ENCODE measurements at regions of chr13 and their contacts with region 1.

Region 1: GRCh38 chr13:50911937-50912795 is 2.6 kb downstream of the RNASEH2B start:
- DNase-seq: peak; percentile 88
- ATAC-seq: peak; percentile 63
- H3K4me3 ChIP-seq: peak overlapping the region; percentile 95
- H3K27ac ChIP-seq: peak overlapping the region; percentile 99
- H3K4me1 ChIP-seq: peaks cover 25% of the 10 kb centered on the region
- H3K27me3 ChIP-seq: no peaks in the 10 kb centered on the region
- CTCF ChIP-seq: peak; percentile 89 to 98 (median 91); a peak in 5 of 6 replicates
- EP300 ChIP-seq: peak; percentile 38 to 94; a peak in 3 of 4 replicates
- POLR2A ChIP-seq: peak; percentile 37; the same call in 1 of the 2 replicates
- RAD21 ChIP-seq: peak; percentile 98

Region 2: GRCh38 chr13:49976314-49977258 is 935.6 kb before region 1 on chr13:
- CTCF ChIA-PET with region 1: interaction called, 56 read pairs
- POLR2A ChIA-PET with region 1: interaction called, 4 read pairs
- RAD21 ChIA-PET with region 1: interaction called, 56 read pairs
- SMC1A ChIA-PET with region 1: interaction called, 33 read pairs
- in situ Hi-C with region 1: loop called (anchors 5 kb)
- intact Hi-C with region 1: loop called (anchors 1 kb)
- DNase-seq: peak; percentile 55
- ATAC-seq: peak; percentile 95
- H3K4me3 ChIP-seq: no peak overlapping the region
- H3K27ac ChIP-seq: no peak overlapping the region
- H3K4me1 ChIP-seq: no peaks in the 10 kb centered on the region
- H3K27me3 ChIP-seq: no peaks in the 10 kb centered on the region
- CTCF ChIP-seq: peak; percentile 86 to 95 (median 88)
- EP300 ChIP-seq: no peak
- POLR2A ChIP-seq: no peak
- RAD21 ChIP-seq: peak; percentile 99

Region 3: DNA sequence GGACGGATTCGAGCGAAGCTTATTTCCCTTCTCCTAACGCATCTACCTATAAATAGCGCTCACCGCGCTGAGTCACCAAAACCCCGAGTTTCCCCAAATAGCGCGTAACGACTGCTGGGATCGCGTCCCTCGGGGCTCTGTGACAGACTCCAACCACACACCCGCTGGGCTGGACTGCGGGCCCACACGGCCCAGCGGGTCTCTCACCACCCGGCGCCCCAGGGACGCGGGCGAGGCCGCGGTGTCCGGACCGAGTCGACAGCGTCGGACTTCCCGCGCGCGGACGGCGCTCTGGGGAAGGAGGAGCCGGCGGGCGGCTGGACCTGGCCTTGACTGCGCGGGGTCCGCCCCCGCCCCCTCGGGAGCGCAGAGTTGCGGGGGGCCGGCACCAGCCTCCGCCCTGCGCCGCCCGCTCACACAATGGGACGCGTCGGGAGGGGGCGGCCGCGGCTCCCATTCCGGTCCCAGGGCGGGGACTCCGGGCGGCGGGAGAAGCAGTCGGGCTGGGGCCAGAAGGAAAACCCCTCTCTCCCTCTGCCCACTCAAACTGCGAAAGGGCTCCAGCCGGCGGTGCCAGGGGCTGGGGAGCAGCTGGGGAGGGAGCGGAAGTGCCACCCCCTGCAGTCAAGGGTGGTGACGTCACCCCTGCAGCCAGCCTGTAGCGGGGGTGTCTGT is 788.2 kb before region 1 on chr13:
- CTCF ChIA-PET with region 1: no interaction called
- POLR2A ChIA-PET with region 1: no interaction called
- RAD21 ChIA-PET with region 1: interaction called, 4 read pairs
- SMC1A ChIA-PET with region 1: no interaction called
- in situ Hi-C with region 1: no loop called
- intact Hi-C with region 1: loop called (anchors 5 kb)
- DNase-seq: no peak
- ATAC-seq: peak; percentile 80
- H3K4me3 ChIP-seq: peak overlapping the region; percentile 62
- H3K27ac ChIP-seq: no peak overlapping the region
- H3K4me1 ChIP-seq: peaks cover 30% of the 10 kb centered on the region
- H3K27me3 ChIP-seq: peaks cover 5 to 7% of the 10 kb centered on the region in 2 experiments; a peak in 3 of 4 replicates
- CTCF ChIP-seq: peak in 1 of 3 experiments; percentile 10; a peak in 1 of 6 replicates
- EP300 ChIP-seq: no peak
- POLR2A ChIP-seq: peak; percentile 65
- RAD21 ChIP-seq: no peak

Region 4: DNA sequence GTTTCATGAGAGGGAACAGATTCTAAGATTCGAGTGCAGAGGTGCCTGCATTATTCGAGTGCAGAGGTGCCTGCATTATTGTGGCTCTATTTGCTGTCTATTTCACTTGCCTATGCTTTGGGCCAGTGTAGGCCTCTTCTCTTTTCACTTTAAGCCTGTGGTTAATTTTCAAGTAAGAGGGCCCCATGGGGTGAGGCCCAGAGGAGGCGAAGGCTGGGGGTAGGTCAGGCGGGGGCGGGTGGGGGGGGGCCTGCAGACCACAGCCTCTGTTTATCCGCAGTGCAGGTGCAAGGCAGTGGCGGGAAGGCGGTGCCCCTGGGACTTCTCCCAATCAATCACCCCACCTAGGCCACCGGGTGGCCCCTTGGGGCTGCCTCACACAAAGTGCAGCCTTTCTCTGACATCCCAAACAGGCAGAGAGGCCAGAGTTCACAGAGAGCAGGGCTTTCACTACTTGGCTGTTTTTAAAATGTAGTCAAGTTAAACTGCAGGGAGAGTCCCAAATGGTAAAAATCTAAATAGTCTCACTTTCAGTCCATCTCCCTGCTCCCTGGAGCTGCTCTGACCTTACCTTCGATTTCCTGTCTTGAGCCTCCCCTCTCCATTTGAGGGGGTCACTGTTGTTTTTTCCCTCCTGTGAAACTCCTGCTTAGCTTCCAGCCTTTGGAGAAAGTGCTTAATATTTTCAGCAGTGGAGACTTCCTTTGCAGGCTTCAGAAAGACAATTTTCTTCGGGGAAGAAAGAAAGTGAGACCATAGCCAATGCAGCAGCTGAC is 317.7 kb before region 1 on chr13:
- CTCF ChIA-PET with region 1: interaction called, 6 read pairs
- POLR2A ChIA-PET with region 1: interaction called, 3 read pairs
- RAD21 ChIA-PET with region 1: interaction called, 10 read pairs
- SMC1A ChIA-PET with region 1: interaction called, 10 read pairs
- in situ Hi-C with region 1: loop called (anchors 10 kb)
- intact Hi-C with region 1: loop called (anchors 2 kb)
- DNase-seq: peak; percentile 79
- ATAC-seq: peak; percentile 91
- H3K4me3 ChIP-seq: peak overlapping the region; percentile 53; the same call in 1 of the 2 replicates
- H3K27ac ChIP-seq: peak overlapping the region; percentile 62
- H3K4me1 ChIP-seq: peaks cover 45% of the 10 kb centered on the region
- H3K27me3 ChIP-seq: no peaks in the 10 kb centered on the region
- CTCF ChIP-seq: 0 out of 6 replicates have a peak, but pooled peaks of 1 of the 3 experiments have one; percentile 17
- EP300 ChIP-seq: peak; percentile 71 to 80
- POLR2A ChIP-seq: no peak
- RAD21 ChIP-seq: peak; percentile 47

Region 5: DNA sequence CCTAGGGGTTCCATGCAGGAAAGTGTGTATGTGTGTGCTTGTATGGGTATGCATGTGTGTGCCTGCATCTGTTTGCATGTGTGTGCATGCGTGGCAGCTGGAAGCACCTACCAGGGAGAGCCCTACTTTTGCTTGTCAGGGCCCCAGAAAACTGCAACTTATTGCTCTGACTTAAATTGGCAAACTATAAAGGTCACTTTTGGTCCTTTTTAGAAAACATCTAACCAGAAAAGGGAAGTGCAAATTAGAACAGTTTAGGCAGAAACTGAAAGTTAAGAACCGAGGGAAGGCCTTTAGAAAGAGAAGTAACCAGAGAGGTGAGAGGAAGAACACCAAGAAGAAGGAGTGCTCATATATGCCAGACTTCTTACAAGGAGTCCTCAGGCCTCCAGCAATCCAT is 101.2 kb before region 1 on chr13:
- CTCF ChIA-PET with region 1: interaction called, 52 read pairs
- POLR2A ChIA-PET with region 1: interaction called, 7 read pairs
- RAD21 ChIA-PET with region 1: interaction called, 68 read pairs
- SMC1A ChIA-PET with region 1: interaction called, 44 read pairs
- in situ Hi-C with region 1: loop called (anchors 5 kb)
- intact Hi-C with region 1: loop called (anchors 2 kb)
- DNase-seq: peak; percentile 76
- ATAC-seq: peak; percentile 97
- H3K4me3 ChIP-seq: peak overlapping the region; percentile 25; the same call in 1 of the 2 replicates
- H3K27ac ChIP-seq: peak overlapping the region; percentile 67
- H3K4me1 ChIP-seq: peaks cover 20% of the 10 kb centered on the region
- H3K27me3 ChIP-seq: no peaks in the 10 kb centered on the region
- CTCF ChIP-seq: no peak
- EP300 ChIP-seq: peak; percentile 67 to 75
- POLR2A ChIP-seq: no peak
- RAD21 ChIP-seq: peak; percentile 16; the same call in 1 of the 2 replicates

Region 6: GRCh38 chr13:51070005-51070649 is 158.0 kb after region 1 on chr13:
- CTCF ChIA-PET with region 1: interaction called, 15 read pairs
- POLR2A ChIA-PET with region 1: no interaction called
- RAD21 ChIA-PET with region 1: interaction called, 8 read pairs
- SMC1A ChIA-PET with region 1: interaction called, 6 read pairs
- in situ Hi-C with region 1: no loop called
- intact Hi-C with region 1: loop called (anchors 2 kb)
- DNase-seq: peak; percentile 30
- ATAC-seq: peak; percentile 95
- H3K4me3 ChIP-seq: no peak overlapping the region
- H3K27ac ChIP-seq: no peak overlapping the region
- H3K4me1 ChIP-seq: no peaks in the 10 kb centered on the region
- H3K27me3 ChIP-seq: no peaks in the 10 kb centered on the region; a peak in 2 of 4 replicates
- CTCF ChIP-seq: peak; percentile 92 to 97 (median 96); a peak in 5 of 6 replicates
- EP300 ChIP-seq: no peak
- POLR2A ChIP-seq: no peak
- RAD21 ChIP-seq: peak; percentile 97

Region 7: GRCh38 chr13:51557875-51558612 is 645.9 kb after region 1 on chr13:
- CTCF ChIA-PET with region 1: no interaction called
- POLR2A ChIA-PET with region 1: no interaction called
- RAD21 ChIA-PET with region 1: no interaction called
- SMC1A ChIA-PET with region 1: no interaction called
- in situ Hi-C with region 1: no loop called
- intact Hi-C with region 1: no loop called
- DNase-seq: no peak
- ATAC-seq: no peak
- H3K4me3 ChIP-seq: no peak overlapping the region
- H3K27ac ChIP-seq: no peak overlapping the region
- H3K4me1 ChIP-seq: peaks cover 31% of the 10 kb centered on the region
- H3K27me3 ChIP-seq: no peaks in the 10 kb centered on the region
- CTCF ChIP-seq: no peak
- EP300 ChIP-seq: no peak
- POLR2A ChIP-seq: no peak
- RAD21 ChIP-seq: no peak